Esophagus muscularis mucosa (tissue), 4 donors: ENCODE measurements at regions of chr12 and their contacts with region 1.

Region 1: GRCh38 chr12:41264281-41264680 is 76.2 kb downstream of the PDZRN4 start:
- DNase-seq: no peak
- H3K4me3 ChIP-seq: no peak overlapping the region
- H3K27ac ChIP-seq: no peak overlapping the region
- H3K4me1 ChIP-seq: peaks cover 0 to 9% (median 7%) of the 10 kb centered on the region in 4 donors
- H3K27me3 ChIP-seq: no peaks in the 10 kb centered on the region
- CTCF ChIP-seq: peak; percentile 45 to 55 (median 53)
- EP300 ChIP-seq: no peak
- POLR2A ChIP-seq: no peak

Region 2: DNA sequence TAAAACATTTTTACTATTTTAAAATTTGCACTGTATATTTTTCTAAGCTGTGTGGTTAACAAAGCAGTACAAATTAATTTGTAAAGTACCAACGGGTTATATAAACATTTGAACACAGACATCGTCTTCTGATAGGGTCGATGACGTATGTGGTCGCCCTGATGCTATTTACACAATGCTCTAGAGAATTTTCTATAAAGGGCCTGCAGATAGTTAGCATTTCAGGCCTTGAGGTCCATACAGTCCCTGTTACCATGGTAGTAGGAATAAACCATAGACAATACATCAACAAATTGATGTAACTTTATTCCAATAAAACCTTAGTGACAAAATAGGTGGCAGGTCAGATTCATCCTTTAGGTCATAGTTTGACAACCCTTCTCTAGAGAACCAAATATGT is 101.8 kb before region 1 on chr12:
- intact Hi-C with region 1: no loop called
- DNase-seq: no peak
- H3K4me3 ChIP-seq: no peak overlapping the region
- H3K27ac ChIP-seq: no peak overlapping the region
- H3K4me1 ChIP-seq: no peaks in the 10 kb centered on the region
- H3K27me3 ChIP-seq: no peaks in the 10 kb centered on the region
- CTCF ChIP-seq: no peak
- EP300 ChIP-seq: no peak
- POLR2A ChIP-seq: no peak

Region 3: DNA sequence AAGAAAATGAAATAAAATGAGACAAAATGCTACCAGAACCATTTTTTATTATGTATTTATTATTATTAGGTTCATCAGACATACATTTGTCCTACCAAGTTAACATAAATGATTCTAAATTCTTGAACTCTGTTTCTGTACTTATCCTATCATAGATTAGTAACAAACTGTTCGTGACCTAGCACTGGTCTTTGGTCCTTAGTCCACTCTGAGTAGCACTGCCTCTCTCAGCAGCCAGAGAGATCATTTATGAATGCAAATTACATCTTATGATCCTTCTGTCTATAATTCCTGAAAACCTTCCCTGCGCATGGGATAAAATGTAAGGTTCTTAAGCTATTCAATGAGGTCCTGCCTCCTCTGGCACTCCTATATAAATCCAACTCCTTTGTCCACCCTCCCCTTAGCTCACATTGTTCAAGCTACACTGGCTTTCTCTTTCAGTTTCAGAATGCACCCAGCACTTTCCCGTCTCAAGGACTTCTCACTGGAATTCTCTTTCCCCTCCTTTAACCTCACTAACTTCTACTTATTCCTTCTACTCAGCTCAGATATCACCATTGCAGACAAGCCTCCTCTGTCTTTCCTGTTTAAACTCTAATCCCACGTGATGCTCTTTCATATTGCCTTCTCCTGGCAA is 59.1 kb before region 1 on chr12:
- intact Hi-C with region 1: no loop called
- DNase-seq: no peak
- H3K4me3 ChIP-seq: peak overlapping the region; percentile 26 to 54 (median 40)
- H3K27ac ChIP-seq: peak overlapping the region; percentile 72 to 77 (median 76)
- H3K4me1 ChIP-seq: peaks cover 0 to 45% (median 41%) of the 10 kb centered on the region in 4 donors
- H3K27me3 ChIP-seq: no peaks in the 10 kb centered on the region
- CTCF ChIP-seq: no peak
- EP300 ChIP-seq: no peak
- POLR2A ChIP-seq: no peak

Region 4: DNA sequence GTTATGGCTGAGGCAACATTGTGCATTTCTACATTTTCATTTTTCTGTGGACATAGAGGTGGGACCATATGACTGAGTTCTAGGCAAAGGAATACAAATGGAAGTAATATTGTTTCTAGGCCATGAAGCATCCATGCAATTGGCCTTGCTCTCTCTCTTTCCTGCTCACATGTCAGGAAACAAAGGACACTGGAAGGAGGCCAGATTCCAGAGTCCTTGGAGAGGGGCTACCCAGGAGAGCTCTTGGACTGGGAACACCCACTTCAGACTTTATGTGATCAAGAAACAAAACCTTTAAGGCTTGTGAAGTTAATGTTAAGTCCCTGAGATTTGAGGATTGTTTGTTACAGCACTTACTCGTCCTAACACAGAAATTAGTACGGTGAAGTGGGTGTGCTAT is 43.4 kb before region 1 on chr12:
- intact Hi-C with region 1: no loop called
- DNase-seq: no peak
- H3K4me3 ChIP-seq: no peak overlapping the region
- H3K27ac ChIP-seq: peak overlapping the region in 3 of 4 donors; percentile 46 to 62 (median 55)
- H3K4me1 ChIP-seq: peaks cover 0 to 55% (median 46%) of the 10 kb centered on the region in 4 donors
- H3K27me3 ChIP-seq: no peaks in the 10 kb centered on the region
- CTCF ChIP-seq: no peak
- EP300 ChIP-seq: no peak
- POLR2A ChIP-seq: no peak

Region 5: GRCh38 chr12:41663598-41664258 is 399.4 kb after region 1 on chr12:
- intact Hi-C with region 1: loop called (anchors 10 kb)
- DNase-seq: no peak
- H3K4me3 ChIP-seq: no peak overlapping the region
- H3K27ac ChIP-seq: no peak overlapping the region
- H3K4me1 ChIP-seq: no peaks in the 10 kb centered on the region
- H3K27me3 ChIP-seq: no peaks in the 10 kb centered on the region
- CTCF ChIP-seq: peak in 2 of 3 experiments; percentile 33 to 63
- EP300 ChIP-seq: no peak
- POLR2A ChIP-seq: no peak

Region 6: GRCh38 chr12:41724216-41724615 is 459.9 kb after region 1 on chr12:
- intact Hi-C with region 1: no loop called
- DNase-seq: no peak
- H3K4me3 ChIP-seq: no peak overlapping the region
- H3K27ac ChIP-seq: no peak overlapping the region
- H3K4me1 ChIP-seq: no peaks in the 10 kb centered on the region
- H3K27me3 ChIP-seq: no peaks in the 10 kb centered on the region
- CTCF ChIP-seq: no peak
- EP300 ChIP-seq: no peak
- POLR2A ChIP-seq: no peak